Aorta (tissue), 5 donors: ENCODE measurements at regions of chr7 and their contacts with region 1.

Region 1: GRCh38 chr7:44490351-44491200 is at the start of gene NUDCD3:
- DNase-seq: peak; percentile 87 to 93
- ATAC-seq: peak; percentile 97
- H3K4me3 ChIP-seq: peak within 1 kb of the TSS; percentile 87 to 95
- H3K27ac ChIP-seq: peak within 1 kb of the TSS; percentile 97 to 98
- H3K4me1 ChIP-seq: peaks cover 2 to 11% of the 10 kb centered on the region in 2 donors
- H3K27me3 ChIP-seq: no peaks in the 10 kb centered on the region
- total RNA-seq, gene NUDCD3: 82.4 to 111 TPM

Region 2: GRCh38 chr7:44044315-44045225 is 446.0 kb before region 1 on chr7 and contains the start of gene DBNL:
- intact Hi-C with region 1: loop called in 1 of 2 experiments (anchors 10 kb)
- DNase-seq: peak; percentile 97 to 99
- ATAC-seq: peak; percentile 94
- H3K4me3 ChIP-seq: peak within 1 kb of the TSS; percentile 78 to 85
- H3K27ac ChIP-seq: peak within 1 kb of the TSS in 1 of 2 donors; percentile 46
- H3K4me1 ChIP-seq: no peaks in the 10 kb centered on the region
- H3K27me3 ChIP-seq: no peaks in the 10 kb centered on the region
- total RNA-seq, gene DBNL: 96.1 to 105 TPM

Region 3: GRCh38 chr7:44534501-44534900 is 43.9 kb after region 1 on chr7:
- intact Hi-C with region 1: no loop called
- DNase-seq: no peak
- ATAC-seq: no peak
- H3K4me3 ChIP-seq: no peak overlapping the region
- H3K27ac ChIP-seq: no peak overlapping the region
- H3K4me1 ChIP-seq: no peaks in the 10 kb centered on the region
- H3K27me3 ChIP-seq: no peaks in the 10 kb centered on the region